H1 (cell line): ENCODE measurements at regions of chr14 and their contacts with region 1.

Region 1: GRCh38 chr14:21233457-21234076 is 35.7 kb downstream of the HNRNPC start:
- DNase-seq: no peak
- H3K4me3 ChIP-seq: no peak overlapping the region
- H3K27ac ChIP-seq: no peak overlapping the region
- H3K4me1 ChIP-seq: no peaks in the 10 kb centered on the region
- H3K27me3 ChIP-seq: no peaks in the 10 kb centered on the region
- CTCF ChIP-seq: peak; percentile 27 to 55 (median 52); a peak in 3 of 4 replicates
- EP300 ChIP-seq: no peak
- POLR2A ChIP-seq: no peak
- RAD21 ChIP-seq: peak; percentile 36 to 39; a peak in 2 of 4 replicates

Region 2: GRCh38 chr14:21185491-21185890 is 48.1 kb before region 1 on chr14:
- CTCF ChIA-PET with region 1: no interaction called
- POLR2A ChIA-PET with region 1: no interaction called
- DNase-seq: no peak
- H3K4me3 ChIP-seq: no peak overlapping the region
- H3K27ac ChIP-seq: no peak overlapping the region
- H3K4me1 ChIP-seq: no peaks in the 10 kb centered on the region
- H3K27me3 ChIP-seq: no peaks in the 10 kb centered on the region
- CTCF ChIP-seq: no peak
- EP300 ChIP-seq: no peak
- POLR2A ChIP-seq: no peak
- RAD21 ChIP-seq: no peak

Region 3: GRCh38 chr14:21215130-21215878 is 18.3 kb before region 1 on chr14:
- CTCF ChIA-PET with region 1: interaction called, 3 read pairs
- POLR2A ChIA-PET with region 1: interaction called, 13 read pairs
- DNase-seq: no peak
- H3K4me3 ChIP-seq: no peak overlapping the region
- H3K27ac ChIP-seq: no peak overlapping the region
- H3K4me1 ChIP-seq: peaks cover 0 to 2% (median 0%) of the 10 kb centered on the region in 4 experiments; a peak in 2 of 7 replicates
- H3K27me3 ChIP-seq: no peaks in the 10 kb centered on the region
- CTCF ChIP-seq: no peak
- EP300 ChIP-seq: no peak
- POLR2A ChIP-seq: no peak
- RAD21 ChIP-seq: no peak